IMR-90 (cell line): ENCODE measurements at regions of chr12 and their contacts with region 1.

Region 1: DNA sequence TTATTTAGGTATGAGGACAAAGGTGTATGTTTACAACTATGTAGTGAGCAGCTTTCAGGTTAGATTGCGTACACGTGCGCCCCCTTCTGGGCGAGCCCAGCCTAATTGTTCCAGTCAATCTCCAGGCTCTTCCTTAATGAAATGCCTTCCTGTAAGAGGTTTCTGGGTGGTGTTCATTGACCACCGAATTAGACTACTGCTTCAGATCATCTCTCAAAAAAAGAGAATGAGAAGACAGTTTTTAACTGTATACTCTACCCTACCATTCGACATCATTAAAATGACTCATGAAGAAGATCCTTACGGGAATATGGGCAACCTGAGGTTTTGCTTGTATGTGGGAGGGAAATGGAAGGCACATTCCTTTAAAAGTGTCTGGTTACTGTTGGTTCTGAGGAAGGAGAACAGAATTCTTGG is 2.1 kb downstream of the LUM start:
- DNase-seq: peak; percentile 80
- ATAC-seq: peak; percentile 78
- H3K4me3 ChIP-seq: peak overlapping the region; percentile 39; the same call in 1 of the 2 replicates
- H3K27ac ChIP-seq: no peak overlapping the region
- H3K4me1 ChIP-seq: peaks cover 2% of the 10 kb centered on the region; the same call in 1 of the 2 replicates
- H3K27me3 ChIP-seq: no peaks in the 10 kb centered on the region
- CTCF ChIP-seq: peak; percentile 57
- POLR2A ChIP-seq: no peak
- RAD21 ChIP-seq: peak; percentile 35

Region 2: GRCh38 chr12:90999966-91000365 is 109.2 kb before region 1 on chr12:
- CTCF ChIA-PET with region 1: no interaction called
- POLR2A ChIA-PET with region 1: no interaction called
- dilution Hi-C with region 1: no loop called
- in situ Hi-C with region 1: no loop called
- intact Hi-C with region 1: loop called (anchors 5 kb)
- DNase-seq: peak; percentile 48
- ATAC-seq: peak; percentile 27; the same call in 1 of the 2 replicates
- H3K4me3 ChIP-seq: no peak overlapping the region
- H3K27ac ChIP-seq: no peak overlapping the region
- H3K4me1 ChIP-seq: peaks cover 2% of the 10 kb centered on the region; the same call in 1 of the 2 replicates
- H3K27me3 ChIP-seq: no peaks in the 10 kb centered on the region
- CTCF ChIP-seq: no peak
- POLR2A ChIP-seq: no peak
- RAD21 ChIP-seq: no peak

Region 3: DNA sequence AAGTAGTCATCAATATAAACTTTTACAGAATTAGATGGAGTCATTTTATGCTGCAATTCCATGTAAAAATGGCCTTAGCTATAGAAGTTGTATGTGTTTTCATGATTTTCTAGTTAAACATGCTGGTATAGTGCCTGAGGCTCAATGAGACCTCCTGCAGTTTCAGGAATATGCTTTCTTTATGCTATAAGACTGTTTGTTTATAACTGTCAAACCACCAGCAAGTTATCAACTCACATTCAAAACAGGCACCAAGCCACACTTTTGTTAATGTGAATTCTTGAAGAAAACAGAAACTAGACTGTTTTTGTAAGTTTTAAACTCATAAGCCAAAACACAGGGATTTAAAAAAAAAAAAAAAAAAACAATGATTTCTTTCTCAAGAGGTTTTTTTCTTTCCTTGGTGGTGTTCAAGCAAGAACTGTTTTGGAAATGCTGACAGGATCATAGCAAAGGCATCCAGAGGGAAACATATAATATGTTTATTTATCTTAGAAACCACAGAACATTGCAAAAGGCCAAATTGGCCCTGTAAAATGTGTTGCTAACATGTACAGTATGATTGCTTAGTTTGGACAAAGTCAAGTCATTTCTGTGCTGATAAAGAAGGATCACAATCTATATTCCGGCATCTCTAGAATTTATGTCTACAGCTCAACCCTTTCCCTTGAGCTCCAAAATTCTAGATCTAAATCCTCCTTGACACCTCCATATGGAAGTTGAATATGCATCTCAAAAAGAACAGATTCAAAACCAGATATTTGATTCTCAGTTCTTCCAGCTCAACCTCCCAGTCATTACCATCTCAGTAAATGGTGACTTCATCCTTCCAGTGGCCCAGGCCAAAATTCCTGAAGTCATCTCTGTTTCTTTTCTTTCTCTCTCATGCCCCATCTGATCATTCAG is 31.1 kb after region 1 on chr12:
- CTCF ChIA-PET with region 1: interaction called, 3 read pairs
- POLR2A ChIA-PET with region 1: no interaction called
- dilution Hi-C with region 1: no loop called
- in situ Hi-C with region 1: no loop called
- intact Hi-C with region 1: loop called (anchors 1 kb)
- DNase-seq: peak; percentile 95
- ATAC-seq: peak; percentile 53
- H3K4me3 ChIP-seq: no peak overlapping the region
- H3K27ac ChIP-seq: peak overlapping the region; percentile 93; the same call in 1 of the 2 replicates
- H3K4me1 ChIP-seq: peaks cover 16% of the 10 kb centered on the region
- H3K27me3 ChIP-seq: no peaks in the 10 kb centered on the region
- CTCF ChIP-seq: no peak
- POLR2A ChIP-seq: no peak
- RAD21 ChIP-seq: no peak

Region 4: GRCh38 chr12:91155990-91156389 is 46.8 kb after region 1 on chr12:
- CTCF ChIA-PET with region 1: interaction called, 11 read pairs
- POLR2A ChIA-PET with region 1: no interaction called
- dilution Hi-C with region 1: no loop called
- in situ Hi-C with region 1: no loop called
- intact Hi-C with region 1: no loop called
- DNase-seq: no peak
- ATAC-seq: no peak
- H3K4me3 ChIP-seq: no peak overlapping the region
- H3K27ac ChIP-seq: no peak overlapping the region
- H3K4me1 ChIP-seq: no peaks in the 10 kb centered on the region
- H3K27me3 ChIP-seq: no peaks in the 10 kb centered on the region
- CTCF ChIP-seq: no peak
- POLR2A ChIP-seq: no peak
- RAD21 ChIP-seq: no peak

Region 5: DNA sequence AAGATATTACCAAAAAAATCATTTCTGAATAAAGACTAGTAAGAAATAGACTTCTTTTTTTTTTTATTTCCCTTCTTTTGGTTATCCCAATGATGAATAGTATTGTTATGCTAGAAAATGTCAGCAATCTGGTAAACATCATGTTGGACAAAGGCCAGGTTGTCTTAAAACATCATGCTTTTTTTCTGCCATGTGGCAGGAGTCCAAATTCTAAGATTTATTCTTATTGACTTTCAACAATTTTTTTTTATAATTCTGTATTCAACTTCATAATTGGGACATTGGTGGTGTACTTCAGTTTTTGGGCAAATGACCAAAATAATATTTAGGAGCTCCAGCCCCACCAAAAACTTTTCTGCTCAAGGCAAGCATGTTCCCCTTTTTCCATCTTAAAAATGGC is 62.9 kb after region 1 on chr12:
- CTCF ChIA-PET with region 1: no interaction called
- POLR2A ChIA-PET with region 1: interaction called, 5 read pairs
- dilution Hi-C with region 1: no loop called
- in situ Hi-C with region 1: no loop called
- intact Hi-C with region 1: loop called (anchors 2 kb)
- DNase-seq: no peak
- ATAC-seq: no peak
- H3K4me3 ChIP-seq: no peak overlapping the region
- H3K27ac ChIP-seq: peak overlapping the region; percentile 49; the same call in 1 of the 2 replicates
- H3K4me1 ChIP-seq: peaks cover 8% of the 10 kb centered on the region
- H3K27me3 ChIP-seq: no peaks in the 10 kb centered on the region
- CTCF ChIP-seq: no peak
- POLR2A ChIP-seq: no peak
- RAD21 ChIP-seq: no peak

Region 6: GRCh38 chr12:91326058-91327027 is 217.2 kb after region 1 on chr12:
- CTCF ChIA-PET with region 1: interaction called, 7 read pairs
- POLR2A ChIA-PET with region 1: no interaction called
- dilution Hi-C with region 1: no loop called
- in situ Hi-C with region 1: no loop called
- intact Hi-C with region 1: loop called (anchors 2 kb)
- DNase-seq: peak; percentile 75
- ATAC-seq: peak; percentile 70
- H3K4me3 ChIP-seq: no peak overlapping the region
- H3K27ac ChIP-seq: peak overlapping the region; percentile 87; the same call in 1 of the 2 replicates
- H3K4me1 ChIP-seq: peaks cover 7% of the 10 kb centered on the region
- H3K27me3 ChIP-seq: no peaks in the 10 kb centered on the region
- CTCF ChIP-seq: peak; percentile 84
- POLR2A ChIP-seq: no peak
- RAD21 ChIP-seq: peak; percentile 72